Right ventricle myocardium superior (tissue), 1 donor: ENCODE measurements at regions of chr16 and their contacts with region 1.

Region 1: DNA sequence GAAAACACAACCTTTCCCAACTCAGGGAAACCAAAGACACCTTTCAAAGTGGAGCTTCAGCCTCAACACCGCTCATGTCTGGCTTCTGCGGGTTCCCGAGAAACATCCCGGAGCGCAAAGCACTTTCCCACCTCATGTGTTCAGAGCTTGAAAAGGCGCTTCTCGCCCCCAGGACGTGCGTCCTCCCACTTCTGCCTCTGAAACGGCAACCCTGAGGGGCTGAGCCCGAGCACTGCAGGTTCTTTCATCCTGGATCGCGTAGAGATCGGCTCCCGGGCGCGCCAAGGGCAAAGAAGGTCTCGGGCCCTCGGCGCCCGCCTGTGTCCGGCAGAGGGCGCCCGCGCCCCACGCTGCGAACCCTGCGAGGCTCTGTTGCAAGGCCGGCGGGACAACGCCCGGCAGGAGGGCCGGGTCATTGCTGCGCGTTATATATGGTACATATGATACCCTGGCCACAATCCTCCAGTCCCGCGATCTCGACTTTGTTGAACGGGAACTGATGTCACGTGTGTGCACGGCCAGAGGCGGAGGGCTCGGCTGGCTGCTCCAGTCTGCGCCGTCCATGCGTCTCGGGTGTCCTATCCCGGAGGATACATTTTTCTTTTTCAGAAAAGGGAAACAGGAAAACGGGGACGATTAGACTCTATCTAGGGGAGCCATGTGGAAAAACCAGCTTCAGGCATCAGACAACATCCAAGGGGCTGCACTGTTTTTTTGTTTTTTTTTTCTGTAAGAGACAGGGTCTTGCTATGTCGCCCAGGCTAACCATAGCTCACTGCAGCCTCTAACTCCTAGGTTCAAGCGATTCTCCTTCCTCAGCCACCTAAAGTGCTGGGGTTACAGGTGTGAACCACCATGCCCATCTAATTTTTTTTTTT is 19.1 kb downstream of the COQ7 start:
- DNase-seq: peak; percentile 94
- ATAC-seq: peak; percentile 99

Region 2: DNA sequence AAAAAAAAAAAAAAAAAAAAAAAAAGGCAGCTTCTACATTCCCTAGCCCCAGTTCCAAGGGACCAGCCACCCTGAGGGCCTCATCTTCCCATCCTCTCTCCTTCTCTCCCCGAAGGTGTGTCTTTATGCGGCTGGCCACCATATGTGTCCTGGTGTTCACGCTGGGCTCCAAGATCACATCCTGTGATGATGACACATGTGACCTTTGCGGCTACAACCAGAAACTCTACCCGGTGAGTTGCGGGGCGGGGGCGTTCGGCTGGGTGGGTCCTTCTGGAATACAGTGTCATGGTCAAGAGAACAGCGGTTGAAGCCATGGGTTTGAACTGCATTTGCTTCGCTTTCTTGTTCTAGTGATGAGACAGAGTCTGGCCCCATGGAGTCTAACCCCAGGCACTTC is 41.8 kb before region 1 on chr16:
- intact Hi-C with region 1: no loop called
- DNase-seq: no peak
- ATAC-seq: no peak

Region 3: DNA sequence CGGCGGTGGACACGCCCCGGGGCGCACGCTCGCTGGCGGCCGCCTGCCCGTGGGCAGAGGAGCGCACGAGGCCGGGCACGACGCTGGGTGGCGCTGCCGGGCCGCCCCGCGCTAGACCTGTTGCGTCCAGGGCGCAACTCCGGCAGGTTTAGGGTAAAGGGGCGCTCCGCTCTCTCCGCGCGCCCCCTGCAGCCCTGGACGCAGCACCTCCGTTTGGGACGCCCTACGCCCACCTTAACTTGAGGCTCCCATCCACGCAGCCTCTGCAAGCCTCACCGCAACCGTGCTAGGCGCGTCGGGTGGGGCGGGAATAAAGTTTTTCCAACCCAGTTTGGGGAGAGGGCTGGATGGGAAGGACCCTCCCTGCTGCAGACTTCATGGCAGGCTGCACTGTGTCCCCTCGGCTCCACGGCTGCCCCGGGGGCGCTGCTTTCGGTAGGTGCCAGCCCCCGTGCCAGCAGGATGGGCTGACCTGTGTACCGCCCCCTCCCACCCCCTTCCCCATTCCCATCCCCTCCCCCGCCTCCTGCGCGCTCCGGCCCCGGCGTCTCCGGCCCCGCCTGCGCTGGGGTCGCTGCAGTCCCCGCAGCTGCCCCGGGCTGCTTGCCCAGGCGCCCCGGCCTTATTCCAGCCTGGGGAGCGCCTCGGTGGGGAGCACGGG is 81.3 kb after region 1 on chr16 and contains the start of gene SYT17:
- intact Hi-C with region 1: loop called (anchors 10 kb)
- DNase-seq: peak; percentile 78
- ATAC-seq: peak; percentile 95
- total RNA-seq, gene SYT17: 0.54 TPM

Region 4: DNA sequence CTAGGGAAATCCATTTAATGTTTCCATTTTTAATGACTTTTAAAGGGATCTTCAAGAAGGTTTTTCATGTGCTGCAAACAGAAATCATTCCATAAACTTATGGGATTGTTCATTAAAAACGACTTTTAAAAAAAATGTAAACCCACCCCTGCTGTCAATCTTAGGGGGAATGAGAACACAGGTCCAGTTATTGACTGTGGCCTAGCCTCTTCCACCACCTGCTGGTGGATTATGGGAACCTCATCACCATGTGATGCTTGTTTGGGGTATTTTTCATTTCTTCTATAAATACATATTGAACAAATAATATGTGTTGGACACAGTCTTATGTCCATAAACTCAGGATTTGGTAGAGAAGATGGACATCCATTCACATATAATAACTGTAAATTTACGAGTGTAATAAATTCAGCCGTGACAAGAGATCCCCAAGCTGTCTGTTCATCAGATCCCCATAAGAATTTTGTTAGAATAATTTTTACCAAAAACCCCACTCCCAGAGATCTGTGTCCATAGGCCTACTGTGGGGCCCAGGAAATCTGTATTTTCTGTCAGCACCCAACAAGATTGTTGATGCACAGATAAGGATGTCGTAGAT is 289.1 kb after region 1 on chr16:
- intact Hi-C with region 1: loop called (anchors 2 kb)
- DNase-seq: no peak
- ATAC-seq: peak; percentile 68

Region 5: DNA sequence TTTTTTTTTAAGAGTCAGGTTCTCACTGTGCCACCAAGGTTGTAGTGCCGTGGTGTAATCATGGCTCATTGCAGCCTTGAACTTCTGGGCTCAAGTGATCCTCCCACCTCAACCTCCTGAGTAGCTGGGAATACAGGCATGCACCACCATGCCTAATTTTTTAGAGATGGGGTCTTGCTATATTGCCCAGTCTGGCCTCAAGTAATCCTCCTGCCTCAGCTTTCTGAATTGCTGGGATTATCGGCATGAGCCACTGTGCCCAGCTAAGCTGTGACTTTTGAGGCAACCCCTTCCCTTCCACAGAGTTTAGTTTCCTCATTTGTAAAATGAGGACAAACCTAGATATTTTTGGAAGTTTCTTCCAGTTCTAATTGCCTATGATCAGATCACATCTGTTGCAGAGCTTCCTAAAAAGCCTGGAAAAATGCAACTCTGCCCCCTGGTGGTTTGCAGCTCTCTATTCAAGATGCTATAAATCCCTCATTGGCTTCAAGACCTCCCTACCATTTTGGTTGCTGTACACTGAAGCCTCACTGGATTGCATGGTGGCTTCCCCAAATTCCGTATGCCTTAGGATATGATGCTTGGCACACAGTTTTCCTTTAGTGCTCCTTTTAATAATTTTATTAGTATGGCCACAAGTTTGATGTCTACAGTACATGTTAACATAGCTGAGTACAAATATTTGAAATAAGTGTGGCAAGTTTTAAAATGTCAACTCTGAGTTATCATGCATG is 416.0 kb after region 1 on chr16:
- intact Hi-C with region 1: loop called (anchors 10 kb)
- DNase-seq: peak; percentile 63
- ATAC-seq: peak; percentile 78